ENCODE measurements at regions of chr10 and their contacts with region 1.

Region 1: GRCh38 chr10:118568327-118568848 is 27.1 kb downstream of the PRLHR start:
- DNase-seq: peak; percentile 36
- H3K4me3 ChIP-seq: no peak overlapping the region
- H3K27ac ChIP-seq: no peak overlapping the region
- H3K4me1 ChIP-seq: no peaks in the 10 kb centered on the region
- H3K27me3 ChIP-seq: no peaks in the 10 kb centered on the region
- CTCF ChIP-seq: peak; percentile 51 to 71

Region 2: DNA sequence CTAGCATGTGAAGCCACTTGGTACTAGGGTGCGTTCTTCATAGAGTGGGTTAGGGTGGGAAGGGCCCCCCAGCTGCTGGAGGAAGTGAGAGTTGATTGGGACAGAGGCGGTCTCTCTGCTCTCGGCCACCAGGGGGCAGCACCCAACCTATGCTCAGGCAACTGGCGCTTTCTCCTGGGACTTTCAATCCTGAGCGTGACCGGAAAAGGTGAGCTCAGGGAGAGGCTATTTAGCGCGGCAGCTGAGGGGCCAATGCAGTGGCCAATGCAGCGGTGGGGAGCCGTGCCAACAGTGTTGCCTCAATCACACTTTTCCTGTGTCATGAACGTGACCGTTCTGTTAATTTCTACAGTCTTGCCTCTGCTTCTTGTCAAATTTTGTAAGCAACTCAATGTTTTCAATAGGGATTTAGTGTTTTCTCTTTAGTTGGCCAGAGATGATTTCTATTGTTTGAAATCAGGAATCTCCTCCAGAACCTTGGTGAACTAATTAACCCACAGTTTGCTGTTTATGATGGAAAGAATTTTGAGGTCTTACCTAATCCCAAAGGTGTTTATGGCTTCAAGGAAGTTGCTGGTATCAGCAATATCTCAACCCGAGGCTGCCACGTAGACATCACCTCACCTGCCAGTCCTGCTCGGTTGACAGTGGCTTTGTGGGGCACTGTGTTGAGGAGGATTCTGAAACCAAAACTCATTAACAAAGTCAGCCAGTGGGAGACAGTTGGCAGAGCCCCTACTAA is 1125.3 kb before region 1 on chr10:
- CTCF ChIA-PET with region 1: interaction called, 14 read pairs
- dilution Hi-C with region 1: no loop called
- in situ Hi-C with region 1: no loop called
- intact Hi-C with region 1: loop called (anchors 10 kb)
- DNase-seq: peak; percentile 78
- H3K4me3 ChIP-seq: no peak overlapping the region
- H3K27ac ChIP-seq: peak overlapping the region; percentile 62
- H3K4me1 ChIP-seq: peaks cover 42% of the 10 kb centered on the region
- H3K27me3 ChIP-seq: no peaks in the 10 kb centered on the region
- CTCF ChIP-seq: peak; percentile 79 to 84

Region 3: GRCh38 chr10:118241229-118242137 is 326.9 kb before region 1 on chr10:
- CTCF ChIA-PET with region 1: no interaction called
- dilution Hi-C with region 1: no loop called
- in situ Hi-C with region 1: no loop called
- intact Hi-C with region 1: loop called (anchors 5 kb)
- DNase-seq: peak; percentile 71
- H3K4me3 ChIP-seq: no peak overlapping the region
- H3K27ac ChIP-seq: no peak overlapping the region
- H3K4me1 ChIP-seq: peaks cover 5% of the 10 kb centered on the region
- H3K27me3 ChIP-seq: peaks cover 2% of the 10 kb centered on the region
- CTCF ChIP-seq: peak; percentile 91 to 94

Region 4: DNA sequence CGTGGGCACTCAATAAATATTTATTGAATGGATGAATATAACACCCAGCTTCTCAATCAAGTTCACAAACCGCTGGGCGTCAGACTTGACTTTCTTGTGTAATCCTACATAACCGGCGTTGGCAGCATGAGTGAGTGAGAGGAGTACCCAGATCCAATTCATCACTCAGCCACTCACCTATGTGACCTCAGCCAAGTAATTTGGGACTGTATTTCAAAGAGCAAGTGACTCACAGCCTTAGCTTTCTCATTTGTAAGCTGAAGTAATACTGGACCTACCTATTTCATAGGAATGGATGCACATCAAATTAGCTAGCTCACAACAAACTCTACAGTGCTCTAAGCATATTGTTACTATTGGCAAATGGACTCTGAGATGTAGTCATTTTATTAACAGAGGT is 172.4 kb before region 1 on chr10:
- CTCF ChIA-PET with region 1: interaction called, 10 read pairs
- dilution Hi-C with region 1: no loop called
- in situ Hi-C with region 1: no loop called
- intact Hi-C with region 1: no loop called
- DNase-seq: peak; percentile 27
- H3K4me3 ChIP-seq: no peak overlapping the region
- H3K27ac ChIP-seq: no peak overlapping the region
- H3K4me1 ChIP-seq: no peaks in the 10 kb centered on the region
- H3K27me3 ChIP-seq: no peaks in the 10 kb centered on the region
- CTCF ChIP-seq: no peak

Region 5: GRCh38 chr10:118511711-118512110 is 56.7 kb before region 1 on chr10:
- CTCF ChIA-PET with region 1: no interaction called
- dilution Hi-C with region 1: no loop called
- in situ Hi-C with region 1: no loop called
- intact Hi-C with region 1: no loop called
- DNase-seq: peak; percentile 28
- H3K4me3 ChIP-seq: no peak overlapping the region
- H3K27ac ChIP-seq: no peak overlapping the region
- H3K4me1 ChIP-seq: peaks cover 23% of the 10 kb centered on the region
- H3K27me3 ChIP-seq: no peaks in the 10 kb centered on the region
- CTCF ChIP-seq: no peak

Region 6: DNA sequence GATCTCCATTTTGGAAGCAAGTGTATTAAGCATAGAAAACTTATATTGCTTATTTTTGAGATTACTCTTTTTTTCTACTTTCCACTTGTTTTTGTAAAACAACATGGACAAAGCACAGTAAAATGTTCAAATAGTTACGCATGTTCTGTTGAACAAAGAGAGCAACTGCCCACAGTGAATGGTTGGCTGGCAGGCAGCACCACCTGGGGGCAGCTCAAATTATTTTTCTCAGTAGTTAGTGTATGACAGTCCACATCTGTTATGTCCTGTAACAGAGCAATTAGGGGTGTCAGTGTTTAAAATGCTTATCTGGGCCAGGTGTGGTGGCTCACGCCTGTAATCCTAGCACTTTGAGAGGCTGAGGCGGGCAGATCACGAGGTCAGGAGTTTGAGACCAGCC is 232.5 kb after region 1 on chr10:
- CTCF ChIA-PET with region 1: interaction called, 27 read pairs
- dilution Hi-C with region 1: no loop called
- in situ Hi-C with region 1: loop called (anchors 5 kb)
- intact Hi-C with region 1: loop called (anchors 1 kb)
- DNase-seq: peak; percentile 26
- H3K4me3 ChIP-seq: no peak overlapping the region
- H3K27ac ChIP-seq: no peak overlapping the region
- H3K4me1 ChIP-seq: peaks cover 20% of the 10 kb centered on the region
- H3K27me3 ChIP-seq: no peaks in the 10 kb centered on the region
- CTCF ChIP-seq: peak; percentile 51 to 68

Region 7: GRCh38 chr10:119028900-119029612 is 460.7 kb after region 1 on chr10:
- CTCF ChIA-PET with region 1: no interaction called
- dilution Hi-C with region 1: no loop called
- in situ Hi-C with region 1: loop called in 1 of 2 experiments (anchors 25 kb)
- intact Hi-C with region 1: loop called (anchors 5 kb)
- DNase-seq: peak; percentile 73
- H3K4me3 ChIP-seq: peak overlapping the region; percentile 24 to 71 (median 32)
- H3K27ac ChIP-seq: no peak overlapping the region
- H3K4me1 ChIP-seq: peaks cover 32% of the 10 kb centered on the region
- H3K27me3 ChIP-seq: no peaks in the 10 kb centered on the region
- CTCF ChIP-seq: peak; percentile 1 to 29

Measured in mammary epithelial cell (primary cell).